Calu3 (cell line): ENCODE measurements at regions of chr7 and their contacts with region 1.

Region 1: DNA sequence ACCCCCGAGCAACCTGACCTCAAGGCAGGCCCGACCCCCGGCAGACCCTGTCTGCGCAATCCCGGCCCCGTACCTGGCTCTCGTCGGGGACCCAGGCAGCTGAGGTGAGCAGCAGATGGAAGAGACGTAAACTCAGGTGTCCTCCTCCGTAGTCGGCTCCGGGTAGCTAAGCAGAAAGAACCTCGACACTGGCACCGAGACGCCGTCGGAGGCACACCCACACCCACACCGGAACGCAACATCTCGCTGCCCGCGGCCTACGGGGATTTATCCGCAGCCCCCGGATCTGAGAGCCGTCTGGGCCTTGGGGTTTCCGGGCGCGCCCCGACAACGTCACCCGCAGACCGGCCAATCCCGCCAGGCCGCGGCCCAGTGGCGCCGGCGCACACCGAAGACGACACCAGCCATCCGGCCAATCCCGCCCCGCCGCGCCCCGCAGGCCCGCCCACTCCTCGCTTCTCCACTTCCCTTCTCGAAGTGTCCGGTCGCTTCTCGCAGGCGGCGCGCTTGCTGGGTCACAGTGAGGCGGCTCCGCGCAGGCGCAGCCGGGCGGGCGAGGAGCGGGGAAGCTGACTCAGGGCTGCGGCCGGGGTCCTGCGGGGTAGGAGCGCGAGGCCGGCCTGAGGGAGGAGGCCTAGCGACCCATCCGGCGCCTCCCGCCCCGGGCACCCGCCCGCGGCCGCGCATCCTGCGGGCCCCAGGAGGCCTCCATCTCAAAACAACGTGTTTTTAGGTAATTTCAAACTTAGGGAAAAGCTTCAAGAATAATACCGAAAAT is at the start of gene ZFAND2A:
- DNase-seq: peak; percentile 100
- H3K4me3 Mint-ChIP-seq: peak within 1 kb of the TSS; percentile 97
- H3K27ac Mint-ChIP-seq: peak within 1 kb of the TSS; percentile 91
- H3K4me1 Mint-ChIP-seq: peaks cover 39% of the 10 kb centered on the region
- H3K27me3 Mint-ChIP-seq: no peaks in the 10 kb centered on the region
- CTCF ChIP-seq: no peak
- total RNA-seq, gene ZFAND2A: 51.2 and 56.6 TPM in 2 replicates

Region 2: GRCh38 chr7:89232-90019 is 1070.7 kb before region 1 on chr7:
- CTCF ChIA-PET with region 1: no interaction called
- intact Hi-C with region 1: no loop called
- DNase-seq: peak; percentile 84
- H3K4me3 Mint-ChIP-seq: peak overlapping the region; percentile 32
- H3K27ac Mint-ChIP-seq: peak overlapping the region; percentile 36
- H3K4me1 Mint-ChIP-seq: peaks cover 81% of the 10 kb centered on the region
- H3K27me3 Mint-ChIP-seq: no peaks in the 10 kb centered on the region
- CTCF ChIP-seq: no peak

Region 3: DNA sequence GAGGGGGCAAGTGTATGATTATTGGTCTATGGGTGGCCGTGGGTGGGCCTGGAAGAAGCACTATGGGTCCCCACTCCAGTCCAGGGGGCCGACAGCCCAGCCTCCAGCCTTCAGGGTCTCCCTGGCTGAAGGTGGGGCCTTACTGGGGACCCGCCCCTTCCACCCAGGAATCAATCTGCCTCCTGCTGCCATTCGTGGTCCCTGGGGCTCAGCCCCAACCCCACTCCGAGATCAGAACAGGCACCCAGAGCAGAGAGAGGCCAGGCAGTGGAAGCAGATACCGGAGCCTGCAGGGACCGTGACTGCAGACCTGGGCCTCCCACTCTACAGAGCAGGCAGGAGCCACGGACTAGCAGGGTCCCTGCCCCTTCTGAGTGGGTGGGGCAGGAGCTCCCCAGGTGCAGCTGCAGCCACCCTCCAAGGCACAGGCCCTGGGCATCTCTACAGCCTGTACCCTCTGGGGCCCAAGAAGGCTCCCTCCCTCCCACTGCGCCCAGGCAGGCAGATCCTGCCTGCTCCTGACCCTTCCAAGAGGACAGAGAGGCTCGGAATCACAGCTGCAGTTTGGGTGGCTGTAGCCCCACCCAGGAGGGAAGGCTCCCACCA is 883.7 kb before region 1 on chr7:
- CTCF ChIA-PET with region 1: no interaction called
- intact Hi-C with region 1: loop called (anchors 5 kb)
- DNase-seq: no peak
- H3K4me3 Mint-ChIP-seq: no peak overlapping the region
- H3K27ac Mint-ChIP-seq: no peak overlapping the region
- H3K4me1 Mint-ChIP-seq: no peaks in the 10 kb centered on the region
- H3K27me3 Mint-ChIP-seq: peaks cover 80% of the 10 kb centered on the region
- CTCF ChIP-seq: no peak

Region 4: DNA sequence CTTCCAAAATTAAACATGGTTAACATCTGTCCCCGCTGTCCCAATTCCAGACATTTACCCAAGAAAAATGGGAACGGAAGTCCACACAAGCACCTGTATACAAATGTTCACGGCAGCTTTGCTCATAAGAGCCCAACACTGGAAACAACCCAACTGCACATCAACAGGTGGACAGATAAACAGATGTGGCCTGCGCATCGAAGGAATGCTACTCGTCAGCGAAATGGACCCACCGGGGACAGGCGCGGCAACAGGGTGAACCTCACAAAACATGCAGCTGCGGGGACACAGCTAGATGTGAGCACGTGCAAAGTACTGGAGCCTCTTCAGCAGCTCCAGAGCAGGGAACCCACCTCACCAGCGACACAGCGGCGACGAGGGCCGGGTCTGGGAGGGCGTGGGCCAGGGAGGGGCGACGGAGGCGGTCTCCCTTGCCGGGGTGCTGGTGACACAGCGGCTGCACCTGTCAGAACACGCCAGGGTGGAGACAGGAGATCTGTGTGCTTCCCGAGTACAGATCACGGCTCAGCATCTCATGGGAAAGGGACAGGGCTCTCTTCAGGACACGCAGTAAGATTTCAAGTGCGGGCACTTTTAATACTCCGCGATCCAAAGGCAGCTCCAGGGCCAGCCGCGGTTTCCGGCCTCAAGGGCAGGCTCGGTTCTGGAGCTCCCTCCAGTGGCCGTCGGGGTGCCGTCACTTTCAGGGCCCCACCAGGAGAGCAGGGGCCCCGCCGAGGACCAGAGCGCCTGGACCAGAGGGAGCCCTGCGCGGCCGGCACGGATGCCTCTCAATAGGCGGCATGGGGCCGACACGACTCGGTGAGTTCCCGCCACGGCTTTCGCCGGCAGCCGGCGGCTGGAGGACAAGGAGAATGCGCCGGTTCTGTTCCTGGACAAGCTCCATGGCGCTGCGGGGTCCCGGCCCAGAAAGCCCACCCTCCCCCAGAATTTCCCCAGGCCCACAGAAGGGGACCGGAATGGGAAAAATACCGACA is 94.5 kb before region 1 on chr7:
- CTCF ChIA-PET with region 1: no interaction called
- intact Hi-C with region 1: no loop called
- DNase-seq: peak; percentile 96
- H3K4me3 Mint-ChIP-seq: no peak overlapping the region
- H3K27ac Mint-ChIP-seq: no peak overlapping the region
- H3K4me1 Mint-ChIP-seq: peaks cover 10% of the 10 kb centered on the region
- H3K27me3 Mint-ChIP-seq: no peaks in the 10 kb centered on the region
- CTCF ChIP-seq: peak; percentile 98

Region 5: DNA sequence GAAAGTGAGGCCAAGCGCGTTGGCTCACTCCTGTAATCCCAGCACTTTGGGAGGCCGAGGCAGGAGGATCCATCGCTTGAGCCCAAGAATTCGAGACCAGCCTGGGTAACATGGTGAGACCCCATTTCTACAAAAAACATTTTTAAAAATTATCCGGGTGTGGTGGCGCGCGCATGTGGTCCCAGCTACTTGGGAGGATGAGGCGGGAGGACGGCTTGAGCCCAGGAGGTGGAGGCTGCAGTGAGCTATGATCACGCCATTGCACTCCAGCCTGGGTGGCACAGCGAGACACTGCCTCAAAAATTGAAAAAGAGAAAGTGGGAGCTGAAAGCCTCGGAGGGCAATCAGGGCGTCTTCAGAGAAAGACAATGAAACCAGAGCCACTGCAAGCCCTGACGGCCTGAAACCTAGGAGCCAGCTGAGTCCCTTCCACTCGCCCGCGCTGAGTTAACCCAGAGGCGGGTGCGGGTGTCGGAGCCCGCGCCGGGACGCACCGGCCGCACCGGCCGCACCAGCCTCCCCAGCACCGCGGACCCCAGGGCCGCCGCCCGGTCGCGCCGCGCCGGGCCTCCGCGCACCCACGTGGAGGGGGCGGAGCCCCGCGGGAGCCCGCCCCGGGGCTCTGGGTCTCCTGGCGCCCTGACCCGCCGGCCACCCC is 22.4 kb before region 1 on chr7:
- CTCF ChIA-PET with region 1: interaction called, 17 read pairs
- intact Hi-C with region 1: no loop called
- DNase-seq: no peak
- H3K4me3 Mint-ChIP-seq: peak overlapping the region; percentile 70
- H3K27ac Mint-ChIP-seq: peak overlapping the region; percentile 4
- H3K4me1 Mint-ChIP-seq: peaks cover 13% of the 10 kb centered on the region
- H3K27me3 Mint-ChIP-seq: no peaks in the 10 kb centered on the region
- CTCF ChIP-seq: no peak

Region 6: GRCh38 chr7:1268738-1269313 is 108.7 kb after region 1 on chr7:
- CTCF ChIA-PET with region 1: no interaction called
- intact Hi-C with region 1: no loop called
- DNase-seq: no peak
- H3K4me3 Mint-ChIP-seq: no peak overlapping the region
- H3K27ac Mint-ChIP-seq: no peak overlapping the region
- H3K4me1 Mint-ChIP-seq: no peaks in the 10 kb centered on the region
- H3K27me3 Mint-ChIP-seq: peaks cover 77% of the 10 kb centered on the region
- CTCF ChIP-seq: no peak